MCF 10A (cell line): ENCODE measurements at regions of chr17 and their contacts with region 1.

Region 1: DNA sequence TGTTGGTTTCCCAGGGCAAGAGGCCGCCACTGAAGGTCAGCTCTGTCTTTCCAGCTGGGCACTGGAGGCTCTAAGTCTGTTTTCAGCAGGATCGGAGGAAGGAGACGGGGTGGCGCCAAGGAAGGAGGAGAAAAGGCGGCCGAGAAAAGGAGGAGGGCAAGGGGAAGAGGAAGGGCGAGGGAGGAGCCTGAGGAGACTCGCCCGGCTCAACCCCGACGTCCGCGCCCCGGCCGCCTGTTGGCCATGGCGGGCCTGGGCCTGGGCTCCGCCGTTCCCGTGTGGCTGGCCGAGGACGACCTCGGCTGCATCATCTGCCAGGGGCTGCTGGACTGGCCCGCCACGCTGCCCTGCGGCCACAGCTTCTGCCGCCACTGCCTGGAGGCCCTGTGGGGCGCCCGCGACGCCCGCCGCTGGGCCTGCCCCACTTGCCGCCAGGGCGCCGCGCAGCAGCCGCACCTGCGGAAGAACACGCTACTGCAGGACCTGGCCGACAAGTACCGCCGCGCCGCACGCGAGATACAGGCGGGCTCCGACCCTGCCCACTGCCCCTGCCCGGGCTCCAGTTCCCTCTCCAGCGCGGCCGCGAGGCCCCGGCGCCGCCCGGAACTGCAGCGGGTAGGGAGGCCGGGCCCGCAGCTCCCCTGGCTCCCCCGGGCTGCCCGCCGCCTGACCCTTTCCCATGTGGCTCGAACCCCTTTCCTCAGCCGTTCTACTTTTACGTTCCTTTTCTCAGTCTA is at the start of gene RNF135:
- DNase-seq: peak; percentile 94
- H3K4me3 Mint-ChIP-seq: peak within 1 kb of the TSS; percentile 99
- H3K27ac Mint-ChIP-seq: peak within 1 kb of the TSS; percentile 99
- H3K4me1 Mint-ChIP-seq: peaks cover 11% of the 10 kb centered on the region
- H3K27me3 Mint-ChIP-seq: no peaks in the 10 kb centered on the region
- CTCF ChIP-seq: no peak
- total RNA-seq, gene RNF135: 20.1 and 31.0 TPM in 2 replicates

Region 2: GRCh38 chr17:29699283-29699682 is 1271.7 kb before region 1 on chr17:
- CTCF ChIA-PET with region 1: no interaction called
- POLR2A ChIA-PET with region 1: no interaction called
- intact Hi-C with region 1: no loop called
- DNase-seq: no peak
- H3K4me3 Mint-ChIP-seq: no peak overlapping the region
- H3K27ac Mint-ChIP-seq: no peak overlapping the region
- H3K4me1 Mint-ChIP-seq: no peaks in the 10 kb centered on the region
- H3K27me3 Mint-ChIP-seq: no peaks in the 10 kb centered on the region
- CTCF ChIP-seq: no peak

Region 3: DNA sequence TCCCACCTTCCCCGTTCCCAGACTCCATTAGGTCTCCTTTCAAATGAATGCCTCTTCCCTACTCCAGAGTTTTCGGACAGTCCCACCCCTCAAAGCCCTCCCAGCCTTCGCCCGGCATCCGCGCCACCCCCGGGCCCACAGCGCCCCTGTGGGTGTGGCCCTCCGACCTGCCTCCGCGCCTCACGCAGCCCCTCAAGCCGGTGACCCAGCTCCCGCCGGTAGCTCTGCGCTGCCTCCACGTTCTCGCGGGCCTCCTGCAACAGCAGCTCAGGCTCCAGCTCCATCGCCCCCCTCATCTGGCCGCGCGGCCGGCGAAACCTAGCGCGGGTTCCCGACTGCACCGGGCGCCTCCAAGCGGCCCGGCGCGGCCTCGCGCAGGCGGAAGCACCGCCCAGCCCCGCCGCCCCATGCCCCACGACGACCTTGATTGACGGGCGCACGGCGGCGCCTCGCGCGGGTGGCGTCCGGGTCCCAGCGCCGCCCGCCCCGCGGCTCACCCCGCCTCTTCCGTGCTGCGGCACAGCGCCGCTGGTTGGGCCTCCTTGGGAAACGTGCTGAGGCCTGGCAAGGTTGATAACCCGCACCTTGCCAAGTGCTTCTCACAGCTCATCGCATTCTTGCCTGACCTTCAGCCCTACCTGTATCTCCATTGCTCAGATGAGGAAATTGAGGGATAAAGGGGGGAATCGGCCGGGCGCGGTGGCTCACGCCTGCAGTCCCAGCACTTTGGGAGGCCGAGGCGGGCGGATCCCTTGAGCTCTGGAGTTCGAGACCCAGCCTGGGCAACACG is 146.4 kb before region 1 on chr17 and contains the start of gene CRLF3:
- CTCF ChIA-PET with region 1: no interaction called
- POLR2A ChIA-PET with region 1: interaction called, 14 read pairs
- intact Hi-C with region 1: no loop called
- DNase-seq: peak; percentile 91
- H3K4me3 Mint-ChIP-seq: peak within 1 kb of the TSS; percentile 100
- H3K27ac Mint-ChIP-seq: peak within 1 kb of the TSS; percentile 83
- H3K4me1 Mint-ChIP-seq: peaks cover 16% of the 10 kb centered on the region
- H3K27me3 Mint-ChIP-seq: no peaks in the 10 kb centered on the region
- CTCF ChIP-seq: peak; percentile 40
- total RNA-seq, gene CRLF3: 14.7 and 15.0 TPM in 2 replicates

Region 4: DNA sequence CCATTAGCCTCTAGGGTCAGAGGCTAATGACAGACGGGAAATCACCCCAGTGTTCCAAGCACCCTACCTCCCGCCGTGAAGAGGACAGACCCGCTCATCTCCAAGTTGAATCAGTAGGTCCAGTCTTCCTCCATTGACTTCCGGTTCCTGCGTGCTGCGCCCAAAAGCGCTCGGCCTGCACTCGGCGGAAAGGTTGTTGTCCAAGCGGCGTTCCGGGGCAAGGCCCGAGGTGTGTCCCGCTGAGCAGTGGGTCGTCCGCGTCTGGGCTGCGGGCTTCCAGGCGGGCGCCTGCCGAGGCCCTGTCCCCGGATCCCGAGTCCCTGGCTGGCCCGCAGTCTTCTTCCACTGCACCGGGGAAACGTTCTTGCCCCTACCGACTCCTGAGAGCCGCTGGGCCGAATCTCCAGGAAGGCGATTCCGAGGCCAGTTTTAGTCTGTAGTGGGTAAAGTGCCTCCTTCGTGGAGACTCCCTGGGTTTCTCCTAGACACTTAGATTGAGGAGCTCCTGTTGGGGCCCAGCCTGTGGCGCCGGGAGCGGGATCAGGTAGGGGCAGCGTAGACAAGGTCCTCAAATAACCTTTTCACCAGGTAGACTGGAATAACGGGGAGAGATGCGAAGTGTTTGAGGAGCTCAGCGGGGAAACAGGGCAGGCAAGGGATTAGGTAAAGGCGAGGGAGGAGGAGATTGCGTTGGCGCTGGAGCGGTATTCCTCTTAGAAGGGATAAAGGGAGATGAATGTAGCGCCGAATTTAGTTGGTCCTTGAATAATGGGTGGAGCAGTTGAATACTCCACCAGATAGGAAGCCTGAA is 64.7 kb before region 1 on chr17 and contains the start of gene TEFM:
- CTCF ChIA-PET with region 1: no interaction called
- POLR2A ChIA-PET with region 1: interaction called, 94 read pairs
- intact Hi-C with region 1: loop called (anchors 1 kb)
- DNase-seq: peak; percentile 90
- H3K4me3 Mint-ChIP-seq: peak within 1 kb of the TSS; percentile 95
- H3K27ac Mint-ChIP-seq: peak within 1 kb of the TSS; percentile 98
- H3K4me1 Mint-ChIP-seq: peaks cover 19% of the 10 kb centered on the region
- H3K27me3 Mint-ChIP-seq: no peaks in the 10 kb centered on the region
- CTCF ChIP-seq: no peak
- total RNA-seq, gene TEFM: 10.7 and 13.8 TPM in 2 replicates

Region 5: GRCh38 chr17:31002047-31002446 is 31.0 kb after region 1 on chr17:
- CTCF ChIA-PET with region 1: interaction called, 3 read pairs
- POLR2A ChIA-PET with region 1: interaction called, 108 read pairs
- intact Hi-C with region 1: no loop called
- DNase-seq: no peak
- H3K4me3 Mint-ChIP-seq: no peak overlapping the region
- H3K27ac Mint-ChIP-seq: no peak overlapping the region
- H3K4me1 Mint-ChIP-seq: no peaks in the 10 kb centered on the region
- H3K27me3 Mint-ChIP-seq: no peaks in the 10 kb centered on the region
- CTCF ChIP-seq: no peak

Region 6: GRCh38 chr17:31068291-31068690 is 97.3 kb after region 1 on chr17:
- CTCF ChIA-PET with region 1: interaction called, 3 read pairs
- POLR2A ChIA-PET with region 1: interaction called, 13 read pairs
- intact Hi-C with region 1: no loop called
- DNase-seq: peak; percentile 55
- H3K4me3 Mint-ChIP-seq: no peak overlapping the region
- H3K27ac Mint-ChIP-seq: peak overlapping the region; percentile 66
- H3K4me1 Mint-ChIP-seq: peaks cover 32% of the 10 kb centered on the region
- H3K27me3 Mint-ChIP-seq: no peaks in the 10 kb centered on the region
- CTCF ChIP-seq: peak; percentile 27

Region 7: DNA sequence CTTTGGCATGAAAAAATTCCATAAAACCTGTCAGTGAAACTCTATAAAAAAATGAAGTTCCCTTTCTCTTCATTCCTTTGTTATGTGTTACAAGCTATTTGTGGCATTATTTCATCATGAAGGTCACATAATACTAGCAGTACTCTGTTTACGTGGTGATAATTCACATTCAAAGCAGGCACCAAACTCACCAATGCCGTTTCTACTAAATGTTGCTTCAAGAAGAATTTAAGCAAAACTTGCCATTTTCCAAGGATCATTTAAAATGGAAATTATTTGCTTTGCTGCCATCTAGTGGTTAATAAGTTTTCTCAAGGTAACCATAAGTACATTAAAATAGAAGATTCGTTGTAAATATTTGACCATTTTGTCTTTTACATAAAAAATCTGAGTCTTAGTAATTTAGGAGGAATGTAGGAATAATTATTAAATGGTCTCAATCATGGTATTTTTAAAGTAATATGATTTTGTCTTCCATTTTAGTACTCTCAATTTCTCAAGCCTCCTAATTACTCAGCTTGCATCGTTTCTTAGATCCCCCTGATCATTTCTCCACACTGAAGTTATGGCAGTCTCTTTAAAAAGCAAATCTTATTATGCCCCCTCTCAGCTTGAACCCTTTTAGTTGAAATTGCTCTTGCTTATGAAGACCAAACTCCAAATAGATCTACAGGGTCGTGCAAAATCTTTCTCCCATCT is 245.2 kb after region 1 on chr17:
- CTCF ChIA-PET with region 1: interaction called, 8 read pairs
- POLR2A ChIA-PET with region 1: interaction called, 12 read pairs
- intact Hi-C with region 1: no loop called
- DNase-seq: peak; percentile 52
- H3K4me3 Mint-ChIP-seq: no peak overlapping the region
- H3K27ac Mint-ChIP-seq: no peak overlapping the region
- H3K4me1 Mint-ChIP-seq: no peaks in the 10 kb centered on the region
- H3K27me3 Mint-ChIP-seq: no peaks in the 10 kb centered on the region
- CTCF ChIP-seq: peak; percentile 32

Region 8: DNA sequence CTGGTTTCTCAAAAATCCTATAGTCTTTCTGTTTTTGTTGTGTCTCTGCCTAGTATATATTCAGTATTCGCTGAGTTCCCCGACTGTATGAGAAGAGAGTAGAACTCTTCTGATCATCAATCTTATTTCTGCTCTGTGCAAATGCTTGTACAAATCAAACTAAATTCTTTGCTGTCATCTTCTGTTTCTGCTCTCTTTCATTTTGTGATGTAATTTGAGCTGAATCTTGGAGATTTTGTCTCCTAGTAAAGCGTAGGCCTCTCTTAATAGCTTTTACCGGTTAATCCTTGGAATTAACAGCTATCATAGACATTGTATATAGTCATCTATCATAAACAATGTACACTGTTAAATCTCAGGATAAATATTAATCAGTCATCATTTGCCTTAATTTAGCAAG is 264.1 kb after region 1 on chr17:
- CTCF ChIA-PET with region 1: no interaction called
- POLR2A ChIA-PET with region 1: no interaction called
- intact Hi-C with region 1: no loop called
- DNase-seq: no peak
- H3K4me3 Mint-ChIP-seq: no peak overlapping the region
- H3K27ac Mint-ChIP-seq: no peak overlapping the region
- H3K4me1 Mint-ChIP-seq: no peaks in the 10 kb centered on the region
- H3K27me3 Mint-ChIP-seq: no peaks in the 10 kb centered on the region
- CTCF ChIP-seq: no peak